Left ventricle myocardium superior (tissue), 1 donor: ENCODE measurements at regions of chr6 and their contacts with region 1.

Region 1: GRCh38 chr6:85482905-85483700 is 33.2 kb downstream of the NT5E start:
- DNase-seq: peak; percentile 87
- ATAC-seq: peak; percentile 93

Region 2: GRCh38 chr6:85354761-85355618 is 128.1 kb before region 1 on chr6:
- intact Hi-C with region 1: loop called (anchors 2 kb)
- DNase-seq: peak; percentile 78
- ATAC-seq: peak; percentile 82

Region 3: GRCh38 chr6:85389151-85389797 is 93.8 kb before region 1 on chr6:
- intact Hi-C with region 1: no loop called
- DNase-seq: no peak
- ATAC-seq: no peak